CD8-positive, alpha-beta T cell (primary cell): ENCODE measurements at regions of chr11 and their contacts with region 1.

Region 1: GRCh38 chr11:93741094-93741881 is at the starts of genes C11orf54 and TAF1D:
- DNase-seq: peak; percentile 92 to 99 (median 96)
- ATAC-seq: peak; percentile 91
- H3K4me3 ChIP-seq: peak within 1 kb of the TSS; percentile 81 to 99
- H3K4me3 Mint-ChIP-seq: peak within 1 kb of the TSS; percentile 100
- H3K27ac ChIP-seq: peak within 1 kb of the TSS; percentile 89 to 95
- H3K27ac Mint-ChIP-seq: peak within 1 kb of the TSS; percentile 100
- H3K4me1 ChIP-seq: peaks cover 46% of the 10 kb centered on the region
- H3K4me1 Mint-ChIP-seq: peaks cover 69% of the 10 kb centered on the region
- H3K27me3 ChIP-seq: no peaks in the 10 kb centered on the region
- H3K27me3 Mint-ChIP-seq: no peaks in the 10 kb centered on the region
- CTCF ChIP-seq: no peak
- total RNA-seq, gene C11orf54: 7.7 to 9.4 TPM
- total RNA-seq, gene TAF1D: 167 to 190 TPM

Region 2: DNA sequence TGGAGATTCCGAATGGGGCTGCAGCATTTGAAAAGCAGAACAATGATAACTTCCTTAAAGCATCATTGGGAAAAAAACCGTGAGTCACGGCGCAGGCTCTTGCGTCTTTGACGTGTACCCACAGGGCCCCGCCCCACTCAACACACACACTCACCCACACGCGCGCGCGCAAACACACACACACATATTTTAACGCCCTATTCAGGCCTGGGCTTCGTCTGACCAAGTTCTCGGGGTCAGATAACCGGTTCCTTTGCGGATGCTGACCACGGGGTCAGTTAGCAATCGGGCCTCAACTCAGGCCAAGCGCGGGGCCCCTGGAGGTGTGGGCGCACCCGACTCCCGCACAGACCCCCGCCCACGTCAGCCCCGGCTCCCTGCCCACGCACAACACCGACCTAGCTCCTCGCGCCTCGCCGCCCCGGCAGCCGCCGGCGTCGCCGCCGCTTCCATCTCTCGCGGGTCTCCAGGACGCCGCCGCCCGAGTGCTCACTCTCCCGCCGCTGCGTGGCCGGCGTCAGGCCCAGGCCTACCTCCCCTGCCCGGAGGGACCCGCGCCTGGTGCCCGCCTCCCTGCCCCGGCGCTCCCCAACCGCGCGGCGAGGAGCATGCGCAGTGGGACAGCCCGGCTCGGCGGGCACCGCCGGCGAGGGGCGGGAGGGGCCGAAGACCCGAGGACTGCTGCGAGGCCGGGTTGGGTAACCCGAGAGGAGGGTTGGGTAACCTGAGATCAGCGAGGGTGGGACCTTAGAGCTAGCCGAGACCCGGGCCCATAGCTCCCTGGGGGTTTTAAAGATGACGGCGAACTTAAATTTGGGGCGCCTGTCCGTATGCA is 543.7 kb before region 1 on chr11 and contains the start of gene SLC36A4:
- CTCF ChIA-PET with region 1: no interaction called
- POLR2A ChIA-PET with region 1: interaction called, 3 read pairs
- intact Hi-C with region 1: loop called (anchors 2 to 5 kb)
- DNase-seq: peak; percentile 70 to 94 (median 86)
- ATAC-seq: peak; percentile 88
- H3K4me3 ChIP-seq: peak within 1 kb of the TSS; percentile 69 to 85
- H3K4me3 Mint-ChIP-seq: peak within 1 kb of the TSS; percentile 97
- H3K27ac ChIP-seq: peak within 1 kb of the TSS; percentile 72 to 93
- H3K27ac Mint-ChIP-seq: peak within 1 kb of the TSS; percentile 96
- H3K4me1 ChIP-seq: peaks cover 6% of the 10 kb centered on the region
- H3K4me1 Mint-ChIP-seq: peaks cover 31% of the 10 kb centered on the region
- H3K27me3 ChIP-seq: no peaks in the 10 kb centered on the region
- H3K27me3 Mint-ChIP-seq: no peaks in the 10 kb centered on the region
- CTCF ChIP-seq: no peak
- total RNA-seq, gene SLC36A4: 16.8 to 17.6 TPM

Region 3: DNA sequence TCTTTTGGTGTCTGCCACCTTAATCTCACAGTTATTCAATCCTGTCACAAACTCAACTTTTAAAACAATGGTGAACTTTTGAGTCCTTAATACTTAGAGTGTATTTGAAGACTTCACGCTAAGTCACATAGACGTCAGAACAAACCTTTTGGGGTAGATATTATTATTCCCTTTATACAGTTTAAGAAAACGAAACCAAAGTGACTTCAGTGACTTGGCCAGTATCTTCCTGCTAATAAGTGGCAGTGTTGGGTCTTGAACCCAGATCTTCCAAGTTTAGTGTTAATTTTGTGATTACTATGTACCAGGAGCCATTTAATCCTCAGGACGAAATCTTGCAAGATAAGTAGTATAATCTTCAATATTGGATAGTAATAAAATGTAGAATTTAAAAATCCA is 79.1 kb before region 1 on chr11:
- CTCF ChIA-PET with region 1: no interaction called
- POLR2A ChIA-PET with region 1: interaction called, 15 read pairs
- intact Hi-C with region 1: loop called (anchors 1 to 2 kb)
- DNase-seq: no peak
- ATAC-seq: no peak
- H3K4me3 ChIP-seq: peak overlapping the region; percentile 73 to 99
- H3K4me3 Mint-ChIP-seq: peak overlapping the region; percentile 86
- H3K27ac ChIP-seq: peak overlapping the region; percentile 75 to 97
- H3K27ac Mint-ChIP-seq: peak overlapping the region; percentile 90
- H3K4me1 ChIP-seq: peaks cover 6% of the 10 kb centered on the region
- H3K4me1 Mint-ChIP-seq: peaks cover 38% of the 10 kb centered on the region
- H3K27me3 ChIP-seq: no peaks in the 10 kb centered on the region
- H3K27me3 Mint-ChIP-seq: no peaks in the 10 kb centered on the region
- CTCF ChIP-seq: no peak

Region 4: DNA sequence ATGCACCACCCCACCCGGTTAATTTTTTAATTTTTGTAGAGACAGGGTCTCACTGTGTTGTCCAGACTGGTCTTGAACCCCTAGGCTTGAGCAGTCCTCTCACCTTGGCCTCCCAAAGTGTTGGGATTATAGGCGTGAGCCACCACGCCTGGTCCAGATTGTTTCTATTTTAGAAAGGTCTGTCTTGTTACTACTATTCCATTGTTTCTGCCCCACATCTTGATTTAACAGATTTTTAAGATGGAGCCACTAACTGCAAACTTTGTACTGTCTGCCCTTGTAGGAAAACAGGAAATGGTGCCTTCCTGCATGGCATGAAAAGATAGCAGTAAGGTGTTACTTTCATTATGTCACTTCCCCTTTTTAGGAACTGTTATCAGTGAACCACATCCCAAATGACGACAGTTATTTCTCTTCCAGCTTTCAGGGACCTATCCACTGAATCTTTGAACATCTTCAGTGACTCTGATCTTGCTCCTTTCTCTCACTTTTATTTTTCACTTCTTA is 23.2 kb before region 1 on chr11:
- CTCF ChIA-PET with region 1: no interaction called
- POLR2A ChIA-PET with region 1: interaction called, 17 read pairs
- intact Hi-C with region 1: no loop called
- DNase-seq: peak in 2 of 9 experiments; percentile 36 to 69
- ATAC-seq: peak; percentile 51
- H3K4me3 ChIP-seq: no peak overlapping the region
- H3K4me3 Mint-ChIP-seq: peak overlapping the region; percentile 38
- H3K27ac ChIP-seq: peak overlapping the region; percentile 5 to 52
- H3K27ac Mint-ChIP-seq: peak overlapping the region; percentile 73
- H3K4me1 ChIP-seq: peaks cover 11% of the 10 kb centered on the region
- H3K4me1 Mint-ChIP-seq: peaks cover 24% of the 10 kb centered on the region
- H3K27me3 ChIP-seq: no peaks in the 10 kb centered on the region
- H3K27me3 Mint-ChIP-seq: no peaks in the 10 kb centered on the region
- CTCF ChIP-seq: no peak

Region 5: DNA sequence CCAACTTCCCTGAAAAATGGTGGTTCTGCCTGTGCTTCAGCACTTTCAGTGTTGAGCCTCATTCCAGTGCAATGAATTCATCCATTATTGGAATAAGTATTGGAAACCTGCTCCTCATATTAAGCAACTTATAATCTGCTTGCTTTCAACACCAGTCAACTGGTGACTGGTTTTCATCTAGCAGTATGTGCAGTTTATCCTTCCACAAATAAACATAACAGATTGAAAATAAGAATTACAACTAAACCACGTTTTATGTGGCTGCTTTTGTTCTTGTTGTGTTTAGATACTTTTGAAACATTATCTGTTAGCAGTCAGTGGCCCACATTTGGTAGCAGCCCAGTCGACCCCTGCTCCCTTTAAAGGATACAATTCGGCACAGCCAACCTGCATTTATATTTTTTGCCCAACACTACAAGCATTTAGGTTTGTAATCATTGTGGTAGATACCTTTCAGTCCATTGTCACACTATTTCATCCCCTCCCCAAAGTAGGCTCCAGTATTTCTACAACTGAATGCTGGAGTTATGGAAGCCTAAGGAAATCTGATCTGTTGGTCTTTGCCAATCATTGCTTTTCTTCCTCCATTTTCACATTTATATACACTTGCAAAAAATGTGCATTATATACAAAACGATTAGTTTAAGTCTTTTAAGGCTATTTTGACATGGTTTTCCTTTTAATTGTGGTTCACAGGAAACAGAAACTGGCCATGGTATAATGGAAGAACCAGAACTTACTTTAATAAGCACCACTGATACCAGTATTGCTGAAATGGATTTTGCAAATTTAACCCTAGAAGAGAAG is 13.1 kb before region 1 on chr11:
- CTCF ChIA-PET with region 1: interaction called, 3 read pairs
- POLR2A ChIA-PET with region 1: interaction called, 24 read pairs
- intact Hi-C with region 1: loop called in 1 of 2 experiments (anchors 1 kb)
- DNase-seq: no peak
- ATAC-seq: no peak
- H3K4me3 ChIP-seq: no peak overlapping the region
- H3K4me3 Mint-ChIP-seq: no peak overlapping the region
- H3K27ac ChIP-seq: no peak overlapping the region
- H3K27ac Mint-ChIP-seq: peak overlapping the region; percentile 68
- H3K4me1 ChIP-seq: peaks cover 1% of the 10 kb centered on the region
- H3K4me1 Mint-ChIP-seq: peaks cover 10% of the 10 kb centered on the region
- H3K27me3 ChIP-seq: no peaks in the 10 kb centered on the region
- H3K27me3 Mint-ChIP-seq: no peaks in the 10 kb centered on the region
- CTCF ChIP-seq: no peak

Region 6: DNA sequence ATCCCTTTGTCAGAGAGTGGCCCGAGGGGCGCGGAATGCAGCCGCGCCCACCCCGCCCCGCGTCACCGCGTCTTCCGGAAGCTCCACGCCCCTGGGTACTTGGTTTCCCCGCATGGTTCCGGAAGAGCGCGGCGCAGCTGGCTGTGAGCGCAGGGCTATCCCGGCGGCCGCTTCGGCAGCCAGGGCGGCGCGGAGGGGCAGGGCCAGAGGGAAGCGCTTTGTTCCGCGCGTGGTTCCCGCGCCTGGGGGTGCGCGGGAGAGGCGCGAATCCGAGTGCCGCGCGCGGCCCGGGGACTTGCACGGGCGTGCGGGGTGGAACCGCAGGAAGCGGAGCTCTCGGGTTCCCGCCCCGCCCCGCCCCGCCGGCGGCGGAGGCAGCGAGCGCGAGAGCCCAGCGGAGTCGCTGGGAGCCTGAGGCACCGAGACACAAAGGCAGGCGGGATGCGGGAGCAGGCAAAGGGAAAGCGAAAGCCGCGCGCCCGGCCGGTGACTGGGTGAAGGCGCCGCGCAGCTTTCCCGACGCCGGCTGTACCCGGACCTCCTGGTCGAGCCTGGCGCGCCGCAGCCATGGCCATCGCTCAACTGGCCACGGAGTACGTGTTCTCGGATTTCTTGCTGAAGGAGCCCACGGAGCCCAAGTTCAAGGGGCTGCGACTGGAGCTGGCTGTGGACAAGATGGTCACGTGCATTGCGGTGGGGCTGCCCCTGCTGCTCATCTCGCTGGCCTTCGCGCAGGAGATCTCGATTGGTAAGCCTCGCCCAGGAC is 387.6 kb after region 1 on chr11 and contains the start of gene PANX1:
- CTCF ChIA-PET with region 1: no interaction called
- POLR2A ChIA-PET with region 1: interaction called, 7 read pairs
- intact Hi-C with region 1: loop called (anchors 2 kb)
- DNase-seq: peak; percentile 41 to 94 (median 75)
- ATAC-seq: peak; percentile 83
- H3K4me3 ChIP-seq: peak within 1 kb of the TSS; percentile 91 to 95
- H3K4me3 Mint-ChIP-seq: no peak within 1 kb of the TSS
- H3K27ac ChIP-seq: peak within 1 kb of the TSS; percentile 85 to 95
- H3K27ac Mint-ChIP-seq: peak within 1 kb of the TSS; percentile 92
- H3K4me1 ChIP-seq: peaks cover 34% of the 10 kb centered on the region
- H3K4me1 Mint-ChIP-seq: peaks cover 26% of the 10 kb centered on the region
- H3K27me3 ChIP-seq: no peaks in the 10 kb centered on the region
- H3K27me3 Mint-ChIP-seq: no peaks in the 10 kb centered on the region
- CTCF ChIP-seq: no peak
- total RNA-seq, gene PANX1: 8.3 to 9.3 TPM